Sigmoid colon (tissue), 7 donors: ENCODE measurements at regions of chr17 and their contacts with region 1.

Region 1: GRCh38 chr17:16521070-16521727 is 29.2 kb upstream of the LRRC75A start:
- DNase-seq: peak; percentile 91
- H3K4me3 ChIP-seq: no peak overlapping the region
- H3K27ac ChIP-seq: peak overlapping the region in 1 of 4 donors; percentile 30
- H3K4me1 ChIP-seq: peaks cover 0 to 11% (median 10%) of the 10 kb centered on the region in 4 donors
- H3K27me3 ChIP-seq: no peaks in the 10 kb centered on the region
- CTCF ChIP-seq: peak; percentile 84 to 93 (median 91)
- EP300 ChIP-seq: no peak
- POLR2A ChIP-seq: no peak

Region 2: DNA sequence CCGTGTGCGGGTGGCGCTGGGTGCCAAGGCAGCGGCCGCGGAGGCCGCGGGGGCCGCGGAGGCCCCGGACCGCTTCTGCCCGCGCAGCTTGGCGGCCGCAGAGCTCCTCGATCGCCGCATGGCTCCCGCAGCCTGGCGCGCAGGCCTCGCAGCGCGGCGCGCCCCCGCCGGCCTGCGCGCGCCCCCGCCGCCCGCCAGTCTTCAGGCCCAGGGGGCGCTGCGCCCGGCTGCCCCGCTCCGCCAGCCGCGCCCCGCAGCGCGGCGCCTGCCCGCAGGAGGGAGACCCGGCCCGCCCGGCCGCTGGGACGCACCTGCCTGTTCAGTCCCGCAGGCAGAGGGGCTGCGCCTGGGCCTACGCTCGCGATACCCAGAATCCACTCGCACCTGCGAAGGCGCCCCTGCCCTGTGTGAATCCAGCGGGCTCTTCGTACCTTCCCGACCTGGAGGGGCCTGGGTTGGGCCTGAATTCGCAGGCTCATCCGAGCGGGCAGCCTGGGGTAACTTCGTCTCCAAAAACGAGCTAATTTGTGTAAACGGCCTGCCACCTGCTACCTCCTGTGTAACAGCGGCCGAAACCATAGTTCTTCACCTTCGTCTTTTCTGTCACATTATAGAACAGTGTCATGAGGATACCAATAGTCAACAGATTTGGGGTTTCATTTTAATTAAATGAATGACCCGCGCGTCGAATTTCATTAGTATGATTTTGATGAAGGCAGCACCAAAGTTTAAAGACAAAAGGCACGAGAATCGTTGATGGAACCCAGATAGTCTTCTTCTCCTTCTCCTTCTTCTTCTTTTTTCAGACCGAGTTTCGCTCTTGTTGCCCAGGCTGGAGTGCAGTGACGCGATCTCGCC is 167.7 kb before region 1 on chr17 and contains the start of gene CENPV:
- intact Hi-C with region 1: no loop called
- DNase-seq: peak; percentile 63
- H3K4me3 ChIP-seq: peak within 1 kb of the TSS; percentile 57 to 65 (median 60)
- H3K27ac ChIP-seq: peak within 1 kb of the TSS; percentile 42 to 68 (median 66)
- H3K4me1 ChIP-seq: peaks cover 0 to 14% (median 10%) of the 10 kb centered on the region in 4 donors
- H3K27me3 ChIP-seq: no peaks in the 10 kb centered on the region
- CTCF ChIP-seq: no peak
- EP300 ChIP-seq: no peak
- POLR2A ChIP-seq: no peak
- total RNA-seq, gene CENPV: 12.8 to 23.8 (median 18.2) TPM

Region 3: DNA sequence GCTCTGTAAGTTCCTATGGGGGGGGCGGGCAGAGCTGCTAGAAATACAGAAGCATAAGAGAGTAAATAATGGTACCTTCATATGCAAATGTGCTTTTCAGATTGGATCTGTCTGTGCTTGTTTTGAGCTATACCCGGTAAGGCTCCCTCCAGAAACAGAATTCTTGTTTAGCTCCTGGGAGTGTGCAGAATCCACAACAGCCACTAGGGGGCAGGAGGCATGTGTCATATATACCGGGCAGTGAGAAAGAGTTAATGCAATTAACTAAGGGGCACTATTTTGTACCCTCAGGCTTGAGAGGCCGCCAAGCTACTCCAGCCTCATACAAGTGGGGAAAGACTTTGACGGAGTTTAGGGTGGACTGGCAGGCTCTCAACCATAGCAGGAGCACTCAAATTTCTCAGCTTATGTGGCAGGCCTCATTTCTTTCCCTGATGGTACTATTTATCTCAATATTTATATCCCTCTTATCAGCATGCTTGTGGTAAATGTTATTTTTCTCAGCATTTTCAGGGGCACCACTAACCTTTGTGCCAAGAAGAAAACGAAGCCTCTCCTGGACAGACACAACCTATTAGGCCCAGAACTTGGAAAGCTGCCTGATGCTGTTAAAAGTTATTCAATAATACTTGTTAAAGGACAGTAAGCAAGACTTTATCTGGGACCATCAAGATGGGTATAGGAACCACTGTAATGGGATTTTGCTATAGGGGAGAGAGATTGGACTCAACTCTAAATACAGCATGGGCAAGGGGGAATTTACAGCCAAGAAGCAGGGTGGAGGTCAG is 157.3 kb before region 1 on chr17:
- intact Hi-C with region 1: loop called (anchors 5 kb)
- DNase-seq: peak; percentile 79
- H3K4me3 ChIP-seq: no peak overlapping the region
- H3K27ac ChIP-seq: peak overlapping the region in 2 of 4 donors; percentile 5 to 52
- H3K4me1 ChIP-seq: peaks cover 0 to 6% (median 0%) of the 10 kb centered on the region in 4 donors
- H3K27me3 ChIP-seq: no peaks in the 10 kb centered on the region
- CTCF ChIP-seq: peak; percentile 49 to 92 (median 86)
- EP300 ChIP-seq: no peak
- POLR2A ChIP-seq: no peak

Region 4: DNA sequence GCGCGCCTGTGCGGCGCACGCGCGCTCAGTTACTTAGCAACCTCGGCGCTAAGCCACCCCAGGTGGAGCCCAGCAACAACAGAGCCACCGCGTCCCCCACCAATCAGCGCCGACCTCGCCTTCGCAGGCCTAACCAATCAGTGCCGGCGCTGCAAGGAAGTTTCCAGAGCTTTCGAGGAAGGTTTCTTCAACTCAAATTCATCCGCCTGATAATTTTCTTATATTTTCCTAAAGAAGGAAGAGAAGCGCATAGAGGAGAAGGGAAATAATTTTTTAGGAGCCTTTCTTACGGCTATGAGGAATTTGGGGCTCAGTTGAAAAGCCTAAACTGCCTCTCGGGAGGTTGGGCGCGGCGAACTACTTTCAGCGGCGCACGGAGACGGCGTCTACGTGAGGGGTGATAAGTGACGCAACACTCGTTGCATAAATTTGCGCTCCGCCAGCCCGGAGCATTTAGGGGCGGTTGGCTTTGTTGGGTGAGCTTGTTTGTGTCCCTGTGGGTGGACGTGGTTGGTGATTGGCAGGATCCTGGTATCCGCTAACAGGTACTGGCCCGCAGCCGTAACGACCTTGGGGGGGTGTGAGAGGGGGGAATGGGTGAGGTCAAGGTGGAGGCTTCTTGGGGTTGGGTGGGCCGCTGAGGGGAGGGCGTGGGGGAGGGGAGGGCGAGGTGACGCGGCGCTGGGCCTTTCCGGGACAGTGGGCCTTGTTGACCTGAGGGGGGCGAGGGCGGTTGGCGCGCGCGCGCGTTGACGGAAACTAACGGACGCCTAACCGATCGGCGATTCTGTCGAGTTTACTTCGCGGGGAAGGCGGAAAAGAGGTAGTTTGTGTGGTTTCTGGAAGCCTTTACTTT is 140.3 kb before region 1 on chr17 and contains the start of gene UBB:
- intact Hi-C with region 1: loop called (anchors 5 kb)
- DNase-seq: peak; percentile 99
- H3K4me3 ChIP-seq: peak within 1 kb of the TSS; percentile 56 to 77 (median 64)
- H3K27ac ChIP-seq: peak within 1 kb of the TSS; percentile 86 to 95 (median 93)
- H3K4me1 ChIP-seq: peaks cover 3 to 31% (median 25%) of the 10 kb centered on the region in 4 donors
- H3K27me3 ChIP-seq: no peaks in the 10 kb centered on the region
- CTCF ChIP-seq: no peak
- EP300 ChIP-seq: peak in 2 of 4 donors; percentile 64 to 77
- POLR2A ChIP-seq: peak; percentile 98
- total RNA-seq, gene UBB: 892 to 1,272 (median 1,168) TPM

Region 5: GRCh38 chr17:16453493-16453851 is 67.7 kb before region 1 on chr17:
- intact Hi-C with region 1: loop called (anchors 1 kb)
- DNase-seq: no peak
- H3K4me3 ChIP-seq: no peak overlapping the region
- H3K27ac ChIP-seq: no peak overlapping the region
- H3K4me1 ChIP-seq: peaks cover 0 to 4% (median 3%) of the 10 kb centered on the region in 4 donors
- H3K27me3 ChIP-seq: no peaks in the 10 kb centered on the region
- CTCF ChIP-seq: peak in 1 of 4 experiments; percentile 5
- EP300 ChIP-seq: no peak
- POLR2A ChIP-seq: no peak